OCI-LY7 (cell line): ENCODE measurements at regions of chr4 and their contacts with region 1.

Region 1: GRCh38 chr4:148790663-148791062 is 348.4 kb upstream of the NR3C2 start:
- DNase-seq: no peak
- H3K4me3 ChIP-seq: no peak overlapping the region
- H3K27ac ChIP-seq: no peak overlapping the region
- H3K4me1 ChIP-seq: no peaks in the 10 kb centered on the region
- CTCF ChIP-seq: no peak

Region 2: DNA sequence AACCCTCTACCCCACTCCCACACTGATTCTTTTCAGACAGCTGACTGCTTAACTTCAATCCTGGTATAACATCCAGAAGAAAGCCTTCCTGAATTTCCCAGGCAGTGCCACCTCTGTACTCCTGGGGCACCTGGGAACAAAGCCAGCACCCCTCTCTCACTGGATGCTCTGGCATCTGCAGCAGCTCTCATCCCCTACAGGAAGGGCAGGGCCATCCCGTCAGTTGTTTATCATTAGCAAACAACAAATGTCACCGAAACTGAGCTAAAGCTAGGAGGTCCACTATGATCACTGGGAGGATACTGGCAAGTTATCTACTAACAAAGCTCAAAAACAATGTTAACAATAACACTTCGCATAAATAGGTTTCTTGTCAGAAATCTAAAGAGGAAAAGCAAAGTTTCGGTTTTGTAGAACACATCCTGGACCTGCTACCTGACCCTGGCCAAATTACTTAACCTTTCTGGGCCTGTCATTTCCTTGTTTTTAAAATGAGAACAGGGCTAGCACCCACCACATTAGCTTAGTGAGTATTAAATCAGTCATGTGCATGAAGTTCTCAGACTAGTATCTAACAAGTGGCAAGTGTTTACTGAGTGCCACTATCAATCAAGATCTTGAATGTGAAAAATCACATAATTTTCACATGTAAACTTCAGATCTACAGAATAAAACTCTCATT is 435.1 kb before region 1 on chr4:
- CTCF ChIA-PET with region 1: no interaction called
- POLR2A ChIA-PET with region 1: no interaction called
- intact Hi-C with region 1: no loop called
- DNase-seq: no peak
- H3K4me3 ChIP-seq: no peak overlapping the region
- H3K27ac ChIP-seq: no peak overlapping the region
- H3K4me1 ChIP-seq: no peaks in the 10 kb centered on the region
- CTCF ChIP-seq: no peak

Region 3: GRCh38 chr4:148800943-148801342 is 10.3 kb after region 1 on chr4:
- CTCF ChIA-PET with region 1: no interaction called
- POLR2A ChIA-PET with region 1: interaction called, 10 read pairs
- intact Hi-C with region 1: no loop called
- DNase-seq: no peak
- H3K4me3 ChIP-seq: no peak overlapping the region
- H3K27ac ChIP-seq: no peak overlapping the region
- H3K4me1 ChIP-seq: no peaks in the 10 kb centered on the region
- CTCF ChIP-seq: no peak

Region 4: GRCh38 chr4:148874331-148874730 is 83.7 kb after region 1 on chr4:
- CTCF ChIA-PET with region 1: no interaction called
- POLR2A ChIA-PET with region 1: no interaction called
- intact Hi-C with region 1: no loop called
- DNase-seq: peak; percentile 7
- H3K4me3 ChIP-seq: no peak overlapping the region
- H3K27ac ChIP-seq: no peak overlapping the region
- H3K4me1 ChIP-seq: no peaks in the 10 kb centered on the region
- CTCF ChIP-seq: no peak